Right lobe of liver (tissue), 6 donors: ENCODE measurements at regions of chr1 and their contacts with region 1.

Region 1: GRCh38 chr1:243354511-243355153 is 98.8 kb downstream of the SDCCAG8 start:
- DNase-seq: no peak
- ATAC-seq: peak; percentile 93 to 97 (median 94)
- H3K4me3 ChIP-seq: peak overlapping the region in 2 of 3 donors; percentile 15 to 32
- H3K27ac ChIP-seq: peak overlapping the region; percentile 28 to 63 (median 54)
- H3K4me1 ChIP-seq: peaks cover 0 to 7% (median 0%) of the 10 kb centered on the region in 4 donors
- H3K27me3 ChIP-seq: no peaks in the 10 kb centered on the region
- CTCF ChIP-seq: no peak
- POLR2A ChIP-seq: no peak

Region 2: DNA sequence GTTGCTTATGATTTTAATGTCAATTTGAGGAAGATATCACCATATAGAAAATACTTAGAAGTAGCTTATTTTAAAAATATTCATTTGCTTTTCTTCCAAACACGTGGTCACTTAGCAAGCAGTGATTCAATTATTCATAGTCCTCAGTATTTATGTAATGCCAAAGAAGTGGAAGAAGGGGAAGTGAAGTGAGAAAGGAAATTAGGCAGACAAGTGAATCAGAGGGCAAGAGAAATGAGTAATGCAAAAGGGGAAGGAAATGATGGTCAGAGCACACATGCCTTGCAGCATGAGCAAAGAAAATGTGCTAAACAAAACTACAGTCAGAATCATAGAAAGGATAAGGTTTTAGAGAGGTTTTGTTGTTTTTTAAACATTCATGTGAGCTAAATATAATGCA is 67.0 kb before region 1 on chr1:
- intact Hi-C with region 1: no loop called
- DNase-seq: no peak
- ATAC-seq: peak; percentile 65 to 90 (median 81)
- H3K4me3 ChIP-seq: no peak overlapping the region
- H3K27ac ChIP-seq: peak overlapping the region; percentile 19 to 67 (median 35)
- H3K4me1 ChIP-seq: no peaks in the 10 kb centered on the region
- H3K27me3 ChIP-seq: no peaks in the 10 kb centered on the region
- CTCF ChIP-seq: no peak
- POLR2A ChIP-seq: no peak

Region 3: DNA sequence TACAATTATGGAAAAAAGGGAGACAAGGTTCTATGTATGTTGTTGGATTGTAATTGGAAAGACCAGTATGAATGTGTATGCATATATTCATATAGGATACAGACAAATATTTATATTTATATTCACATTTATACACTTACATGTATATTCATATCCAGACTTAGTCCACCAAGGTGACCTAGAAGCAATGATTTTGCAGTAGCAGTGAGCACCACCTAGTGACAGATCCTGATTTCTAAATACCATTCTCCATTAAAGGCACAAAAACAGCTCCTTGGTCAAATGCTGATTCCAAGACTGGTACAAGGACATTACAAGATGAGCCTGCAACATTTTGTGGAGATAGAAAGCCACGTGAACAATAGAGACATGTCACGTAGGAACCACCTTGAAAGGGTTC is 54.7 kb after region 1 on chr1:
- intact Hi-C with region 1: loop called in 1 of 2 experiments (anchors 10 kb)
- DNase-seq: no peak
- ATAC-seq: peak; percentile 79 to 90 (median 84)
- H3K4me3 ChIP-seq: no peak overlapping the region
- H3K27ac ChIP-seq: no peak overlapping the region
- H3K4me1 ChIP-seq: peaks cover 0 to 5% (median 0%) of the 10 kb centered on the region in 4 donors
- H3K27me3 ChIP-seq: no peaks in the 10 kb centered on the region
- CTCF ChIP-seq: peak; percentile 39 to 68 (median 52)
- POLR2A ChIP-seq: no peak